ENCODE measurements at regions of chr1 and their contacts with region 1.

Region 1: GRCh38 chr1:226121587-226122400 is 59.3 kb downstream of the H3-3A start:
- DNase-seq: peak in 1 of 2 donors; percentile 31
- ATAC-seq: peak; percentile 86 to 88
- H3K4me3 ChIP-seq: peak overlapping the region; percentile 58 to 79 (median 69)
- H3K27ac ChIP-seq: peak overlapping the region; percentile 32 to 66 (median 56)
- H3K4me1 ChIP-seq: no peaks in the 10 kb centered on the region
- H3K27me3 ChIP-seq: no peaks in the 10 kb centered on the region
- CTCF ChIP-seq: peak; percentile 60 to 98 (median 97)
- POLR2A ChIP-seq: no peak

Region 2: GRCh38 chr1:225999227-225999911 is 122.4 kb before region 1 on chr1 and contains the start of gene SDE2:
- in situ Hi-C with region 1: no loop called
- intact Hi-C with region 1: loop called (anchors 5 kb)
- DNase-seq: peak; percentile 100
- ATAC-seq: peak; percentile 85 to 87
- H3K4me3 ChIP-seq: peak within 1 kb of the TSS; percentile 73 to 90 (median 79)
- H3K27ac ChIP-seq: peak within 1 kb of the TSS; percentile 92 to 98 (median 93)
- H3K4me1 ChIP-seq: peaks cover 31 to 41% of the 10 kb centered on the region in 2 donors
- H3K27me3 ChIP-seq: no peaks in the 10 kb centered on the region
- CTCF ChIP-seq: no peak
- POLR2A ChIP-seq: peak; percentile 93 to 95
- total RNA-seq, gene SDE2: 20.1 to 30.0 (median 23.0) TPM

Region 3: DNA sequence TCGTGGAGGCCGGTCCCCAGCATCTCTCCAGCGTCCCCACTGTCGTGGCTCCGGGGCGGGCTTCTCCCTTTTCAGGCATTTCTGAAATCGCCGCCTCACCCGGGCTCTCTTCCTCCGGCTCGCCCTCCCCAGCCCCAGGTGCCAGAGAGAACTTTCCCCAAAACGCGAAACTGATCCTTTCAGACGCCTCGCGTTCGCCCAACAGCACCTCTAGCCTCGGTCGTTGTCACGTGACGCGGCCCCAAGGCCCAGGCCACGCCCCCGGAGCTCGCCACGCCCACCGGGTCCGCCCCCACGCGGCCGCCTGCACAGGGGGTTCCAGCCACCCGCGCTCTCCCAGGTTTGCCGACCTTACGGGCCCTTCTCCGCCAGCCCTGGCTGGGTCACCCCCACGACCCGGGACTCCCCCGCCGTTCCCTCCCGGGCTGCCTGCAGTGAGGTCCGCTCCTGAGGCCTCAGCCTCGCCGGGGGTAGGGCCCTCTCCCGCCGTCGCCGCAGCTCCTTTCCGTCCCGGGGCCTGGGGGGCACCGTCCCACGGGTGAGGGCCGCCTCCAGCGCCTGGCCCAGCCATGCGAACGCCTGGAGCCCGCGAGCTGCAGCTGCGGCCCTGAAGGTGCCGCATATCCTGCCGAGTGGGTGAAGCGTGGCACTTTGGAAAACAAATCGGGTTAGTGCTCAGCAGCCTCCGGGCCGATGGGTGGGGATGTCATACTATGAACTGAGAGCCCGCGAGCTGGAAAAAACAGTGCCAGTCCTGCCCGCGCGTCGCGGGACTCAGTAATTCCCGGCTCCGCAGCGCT is 38.3 kb before region 1 on chr1:
- in situ Hi-C with region 1: no loop called
- intact Hi-C with region 1: loop called (anchors 5 kb)
- DNase-seq: peak; percentile 77 to 83
- ATAC-seq: peak; percentile 94 to 95
- H3K4me3 ChIP-seq: peak overlapping the region; percentile 66 to 84 (median 74)
- H3K27ac ChIP-seq: peak overlapping the region; percentile 43 to 79 (median 66)
- H3K4me1 ChIP-seq: peaks cover 0 to 12% of the 10 kb centered on the region in 2 donors
- H3K27me3 ChIP-seq: no peaks in the 10 kb centered on the region
- CTCF ChIP-seq: peak in 2 of 5 experiments; percentile 19 to 29
- POLR2A ChIP-seq: peak; percentile 36 to 43

Region 4: GRCh38 chr1:226109829-226110248 is 12.0 kb before region 1 on chr1:
- in situ Hi-C with region 1: no loop called
- intact Hi-C with region 1: loop called (anchors 1 kb)
- DNase-seq: peak; percentile 73 to 79
- ATAC-seq: peak; percentile 87 to 89
- H3K4me3 ChIP-seq: peak overlapping the region; percentile 66 to 92 (median 84)
- H3K27ac ChIP-seq: peak overlapping the region; percentile 93 to 98 (median 96)
- H3K4me1 ChIP-seq: peaks cover 23 to 24% of the 10 kb centered on the region in 2 donors
- H3K27me3 ChIP-seq: no peaks in the 10 kb centered on the region
- CTCF ChIP-seq: peak in 1 of 5 experiments; percentile 34
- POLR2A ChIP-seq: peak; percentile 57 to 66

Region 5: GRCh38 chr1:226186124-226187018 is 64.6 kb after region 1 on chr1 and contains the start of gene ACBD3:
- in situ Hi-C with region 1: loop called in 1 of 4 experiments (anchors 10 kb)
- intact Hi-C with region 1: loop called (anchors 5 kb)
- DNase-seq: peak; percentile 83 to 86
- ATAC-seq: peak; percentile 97 to 98
- H3K4me3 ChIP-seq: peak within 1 kb of the TSS; percentile 89 to 100 (median 94)
- H3K27ac ChIP-seq: peak within 1 kb of the TSS; percentile 89 to 97 (median 92)
- H3K4me1 ChIP-seq: peaks cover 27 to 42% of the 10 kb centered on the region in 2 donors
- H3K27me3 ChIP-seq: no peaks in the 10 kb centered on the region
- CTCF ChIP-seq: peak in 2 of 5 experiments; percentile 30 to 41
- POLR2A ChIP-seq: peak; percentile 83 to 95
- total RNA-seq, gene ACBD3: 31.1 to 43.9 (median 36.6) TPM

Region 6: DNA sequence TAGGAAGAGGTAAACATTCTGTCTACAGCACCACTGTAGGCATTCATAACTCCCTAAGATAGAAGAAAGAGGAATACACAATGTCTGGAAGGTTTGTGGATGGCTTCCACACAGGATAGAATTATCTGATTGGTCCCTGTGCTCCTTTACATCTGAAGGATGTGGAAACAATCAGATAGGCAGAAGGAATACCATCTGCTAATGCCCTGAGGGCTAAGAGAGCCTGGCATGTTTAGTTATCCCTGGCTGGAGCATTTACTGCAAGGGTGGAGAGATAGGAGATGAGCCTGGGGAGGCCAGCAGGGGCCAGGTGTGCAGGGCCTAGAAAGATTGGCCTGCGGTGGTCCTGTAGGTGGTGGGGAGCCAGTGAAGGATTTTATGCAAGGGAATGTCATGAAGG is 73.3 kb after region 1 on chr1:
- in situ Hi-C with region 1: loop called in 3 of 4 experiments (anchors 5 to 10 kb)
- intact Hi-C with region 1: loop called (anchors 1 kb)
- DNase-seq: no peak
- ATAC-seq: no peak
- H3K4me3 ChIP-seq: no peak overlapping the region
- H3K27ac ChIP-seq: no peak overlapping the region
- H3K4me1 ChIP-seq: no peaks in the 10 kb centered on the region
- H3K27me3 ChIP-seq: no peaks in the 10 kb centered on the region
- CTCF ChIP-seq: no peak
- POLR2A ChIP-seq: no peak

Region 7: GRCh38 chr1:226201029-226201593 is 79.3 kb after region 1 on chr1:
- in situ Hi-C with region 1: loop called in 3 of 4 experiments (anchors 5 to 10 kb)
- intact Hi-C with region 1: loop called (anchors 1 kb)
- DNase-seq: no peak
- ATAC-seq: no peak
- H3K4me3 ChIP-seq: no peak overlapping the region
- H3K27ac ChIP-seq: no peak overlapping the region
- H3K4me1 ChIP-seq: no peaks in the 10 kb centered on the region
- H3K27me3 ChIP-seq: no peaks in the 10 kb centered on the region
- CTCF ChIP-seq: no peak
- POLR2A ChIP-seq: no peak

Region 8: GRCh38 chr1:226308723-226309315 is 187.0 kb after region 1 on chr1 and contains the start of gene LIN9:
- in situ Hi-C with region 1: no loop called
- intact Hi-C with region 1: no loop called
- DNase-seq: peak; percentile 69 to 75
- ATAC-seq: peak; percentile 96 to 99
- H3K4me3 ChIP-seq: peak within 1 kb of the TSS; percentile 86 to 98 (median 96)
- H3K27ac ChIP-seq: peak within 1 kb of the TSS; percentile 76 to 85 (median 82)
- H3K4me1 ChIP-seq: peaks cover 7 to 9% of the 10 kb centered on the region in 2 donors
- H3K27me3 ChIP-seq: no peaks in the 10 kb centered on the region
- CTCF ChIP-seq: no peak
- POLR2A ChIP-seq: peak in 1 of 2 donors; percentile 39
- total RNA-seq, gene LIN9: 2.1 to 4.7 (median 2.8) TPM

Measured in gastrocnemius medialis (tissue), 4 donors.